ENCODE measurements at regions of chr13 and their contacts with region 1.

Region 1: DNA sequence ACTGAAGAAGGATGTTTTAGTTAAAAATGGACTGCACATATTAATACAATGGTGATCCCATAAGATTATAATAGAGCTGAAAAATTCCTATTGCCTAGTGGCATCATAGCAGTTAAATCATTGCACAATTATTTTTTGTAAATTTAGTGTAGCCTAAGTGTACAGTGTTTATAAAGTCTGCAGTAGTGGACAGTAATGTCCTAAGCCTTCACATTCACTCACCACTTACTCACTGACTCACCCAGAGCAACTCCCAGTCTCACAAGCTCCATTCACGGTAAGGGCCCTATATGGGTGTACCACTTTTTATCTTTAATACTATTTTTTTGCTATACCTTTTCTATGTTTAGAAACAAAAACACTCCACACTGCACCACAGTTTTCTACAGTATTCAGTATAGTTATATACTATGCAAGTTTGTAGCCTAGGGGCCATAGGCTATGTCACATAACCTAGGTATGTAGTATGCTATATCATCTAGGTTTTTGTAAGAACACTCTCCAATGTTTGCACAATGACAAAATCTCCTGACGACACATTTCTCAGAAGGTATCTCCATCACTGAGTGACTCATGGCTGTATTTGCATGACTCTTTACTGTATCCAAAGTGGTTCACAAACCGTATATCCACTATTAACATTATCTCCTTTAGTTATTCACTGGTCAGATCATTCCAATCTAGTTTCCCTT is 536.0 kb downstream of the KLF12 start:
- DNase-seq: peak; percentile 93
- ATAC-seq: peak; percentile 88
- H3K4me3 ChIP-seq: no peak overlapping the region
- H3K27ac ChIP-seq: peak overlapping the region; percentile 99
- H3K4me1 ChIP-seq: peaks cover 49% of the 10 kb centered on the region
- H3K27me3 ChIP-seq: no peaks in the 10 kb centered on the region
- CTCF ChIP-seq: no peak

Region 2: DNA sequence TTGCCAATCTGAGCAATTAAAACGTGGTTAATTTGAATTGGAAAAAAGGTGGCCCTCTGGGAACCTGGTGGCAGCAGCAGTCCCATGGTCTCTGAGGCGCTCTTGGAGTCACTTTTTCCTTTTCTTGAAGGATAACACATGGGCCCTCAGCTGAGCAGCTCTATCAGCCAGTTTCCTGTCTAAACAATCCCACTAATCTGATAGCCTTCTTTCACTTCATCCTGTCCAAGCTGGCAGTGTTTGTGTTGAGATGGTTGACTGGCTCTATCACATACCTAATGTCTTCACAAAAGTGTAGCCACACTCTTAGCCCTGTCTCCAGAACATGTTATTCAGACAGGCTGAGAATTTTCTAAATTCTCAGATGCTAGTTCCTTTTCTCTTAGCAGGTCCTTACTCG is 881.4 kb before region 1 on chr13:
- CTCF ChIA-PET with region 1: no interaction called
- POLR2A ChIA-PET with region 1: no interaction called
- intact Hi-C with region 1: no loop called
- DNase-seq: no peak
- ATAC-seq: no peak
- H3K4me3 ChIP-seq: no peak overlapping the region
- H3K27ac ChIP-seq: no peak overlapping the region
- H3K4me1 ChIP-seq: no peaks in the 10 kb centered on the region
- H3K27me3 ChIP-seq: no peaks in the 10 kb centered on the region
- CTCF ChIP-seq: no peak

Region 3: GRCh38 chr13:73390100-73390499 is 208.1 kb before region 1 on chr13:
- CTCF ChIA-PET with region 1: no interaction called
- POLR2A ChIA-PET with region 1: no interaction called
- intact Hi-C with region 1: no loop called
- DNase-seq: no peak
- ATAC-seq: no peak
- H3K4me3 ChIP-seq: no peak overlapping the region
- H3K27ac ChIP-seq: no peak overlapping the region
- H3K4me1 ChIP-seq: peaks cover 7% of the 10 kb centered on the region; the same call in 1 of the 2 replicates
- H3K27me3 ChIP-seq: no peaks in the 10 kb centered on the region
- CTCF ChIP-seq: no peak

Region 4: GRCh38 chr13:73465617-73465971 is 132.6 kb before region 1 on chr13:
- CTCF ChIA-PET with region 1: no interaction called
- POLR2A ChIA-PET with region 1: no interaction called
- intact Hi-C with region 1: loop called (anchors 10 kb)
- DNase-seq: peak; percentile 85
- ATAC-seq: peak; percentile 84
- H3K4me3 ChIP-seq: no peak overlapping the region
- H3K27ac ChIP-seq: peak overlapping the region; percentile 97
- H3K4me1 ChIP-seq: peaks cover 31% of the 10 kb centered on the region
- H3K27me3 ChIP-seq: no peaks in the 10 kb centered on the region
- CTCF ChIP-seq: no peak

Region 5: DNA sequence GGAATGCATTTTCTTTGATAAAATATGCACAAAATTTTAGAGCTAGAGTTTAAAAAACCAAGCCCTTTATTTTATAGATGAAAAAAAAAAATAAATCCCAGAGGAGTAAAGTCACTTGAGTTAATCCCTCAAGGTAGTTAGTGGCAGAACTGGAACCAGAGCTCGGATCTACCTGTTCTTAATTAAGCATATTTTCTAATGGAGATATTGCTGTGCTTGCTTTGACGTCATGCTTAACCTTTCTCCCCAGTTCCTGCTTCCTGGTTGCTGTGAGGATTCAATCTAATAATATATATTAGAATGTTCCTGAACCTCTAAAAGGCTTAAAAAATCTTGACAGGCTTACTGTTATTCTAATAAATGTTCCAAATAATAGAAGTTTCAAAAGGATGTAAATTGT is 836.6 kb after region 1 on chr13:
- CTCF ChIA-PET with region 1: no interaction called
- POLR2A ChIA-PET with region 1: no interaction called
- intact Hi-C with region 1: no loop called
- DNase-seq: no peak
- ATAC-seq: no peak
- H3K4me3 ChIP-seq: no peak overlapping the region
- H3K27ac ChIP-seq: no peak overlapping the region
- H3K4me1 ChIP-seq: no peaks in the 10 kb centered on the region
- H3K27me3 ChIP-seq: no peaks in the 10 kb centered on the region
- CTCF ChIP-seq: no peak